ENCODE measurements at regions of chr6 and their contacts with region 1.

Region 1: GRCh38 chr6:19571176-19571575 is 266.0 kb upstream of the ID4 start:
- DNase-seq: no peak
- H3K4me3 ChIP-seq: no peak overlapping the region
- H3K27ac ChIP-seq: no peak overlapping the region
- H3K4me1 ChIP-seq: no peaks in the 10 kb centered on the region
- H3K27me3 ChIP-seq: no peaks in the 10 kb centered on the region
- CTCF ChIP-seq: no peak

Region 2: DNA sequence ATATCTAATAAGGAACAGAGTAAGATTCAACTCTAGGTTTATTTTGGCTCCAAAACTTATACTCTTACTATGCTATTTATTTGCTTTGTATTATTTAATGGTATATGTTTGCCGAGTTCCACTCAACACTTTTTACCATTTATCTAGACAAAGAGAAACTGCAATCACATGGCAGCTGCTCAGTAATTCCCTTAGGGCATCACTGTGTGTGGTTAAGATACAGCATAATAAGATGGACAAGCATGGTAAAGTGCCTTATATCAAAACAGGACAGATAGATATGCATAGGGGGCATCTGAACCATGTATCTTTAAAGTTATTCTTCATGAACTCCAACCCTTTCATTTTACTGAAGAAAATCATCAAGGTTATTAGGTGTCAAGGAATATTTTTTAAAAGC is 217.0 kb before region 1 on chr6:
- intact Hi-C with region 1: loop called (anchors 5 kb)
- DNase-seq: no peak
- H3K4me3 ChIP-seq: no peak overlapping the region
- H3K27ac ChIP-seq: no peak overlapping the region
- H3K4me1 ChIP-seq: no peaks in the 10 kb centered on the region
- H3K27me3 ChIP-seq: no peaks in the 10 kb centered on the region
- CTCF ChIP-seq: no peak

Measured in tibial artery (tissue), 4 donors.